ENCODE measurements at regions of chr1 and their contacts with region 1.

Region 1: DNA sequence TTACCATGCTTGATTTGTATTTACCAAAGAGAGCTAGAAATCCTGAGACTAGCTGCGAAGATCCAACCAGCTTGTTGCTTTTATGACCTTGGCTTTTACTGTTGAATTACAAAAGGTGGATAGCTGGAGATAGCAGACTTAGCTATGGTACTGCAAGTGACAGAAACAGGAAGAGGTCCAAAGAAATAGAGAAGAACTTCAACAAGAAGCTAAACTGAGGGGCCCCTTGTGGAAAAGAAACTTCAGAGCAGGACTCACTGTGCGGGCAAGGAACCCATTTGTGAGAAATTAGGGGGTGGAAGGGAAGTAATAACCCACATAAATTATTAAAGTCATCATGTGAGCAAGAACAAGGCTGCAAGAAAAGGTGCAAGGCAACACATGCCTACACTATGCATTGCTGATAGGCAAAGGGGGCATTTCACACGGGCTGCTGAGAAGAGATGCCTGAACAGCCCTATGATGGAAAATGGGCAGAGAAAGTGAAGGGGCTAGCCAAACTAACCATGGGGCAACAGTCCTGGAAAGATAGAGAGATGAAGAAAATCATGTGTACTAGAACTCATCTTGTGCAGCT is 116.6 kb upstream of the PRDX6 start:
- DNase-seq: peak in 1 of 9 donors; percentile 1
- ATAC-seq: no peak
- H3K4me3 ChIP-seq: no peak overlapping the region
- H3K4me3 Mint-ChIP-seq: peak overlapping the region in 1 of 10 donors; percentile 3
- H3K27ac ChIP-seq: no peak overlapping the region
- H3K27ac Mint-ChIP-seq: peak overlapping the region in 3 of 9 donors; percentile 2 to 62 (median 25)
- H3K4me1 ChIP-seq: peaks cover 5 to 9% of the 10 kb centered on the region in 2 donors
- H3K4me1 Mint-ChIP-seq: peaks cover 6 to 27% (median 14%) of the 10 kb centered on the region in 7 donors
- H3K27me3 ChIP-seq: no peaks in the 10 kb centered on the region
- H3K27me3 Mint-ChIP-seq: peaks cover 0 to 2% (median 0%) of the 10 kb centered on the region in 5 donors

Region 2: GRCh38 chr1:174659823-174660515 is 1299.4 kb after region 1 on chr1:
- CTCF ChIA-PET with region 1: no interaction called
- POLR2A ChIA-PET with region 1: no interaction called
- intact Hi-C with region 1: loop called in 1 of 2 experiments (anchors 10 kb)
- DNase-seq: no peak
- ATAC-seq: no peak
- H3K4me3 ChIP-seq: no peak overlapping the region
- H3K4me3 Mint-ChIP-seq: no peak overlapping the region
- H3K27ac ChIP-seq: no peak overlapping the region
- H3K27ac Mint-ChIP-seq: no peak overlapping the region
- H3K4me1 ChIP-seq: no peaks in the 10 kb centered on the region
- H3K4me1 Mint-ChIP-seq: peaks cover 0 to 3% (median 0%) of the 10 kb centered on the region in 7 donors
- H3K27me3 ChIP-seq: no peaks in the 10 kb centered on the region
- H3K27me3 Mint-ChIP-seq: no peaks in the 10 kb centered on the region